Activated T-helper 1 cell treated with anti-CD3 and anti-CD28 coated beads, Interleukin-12 subunit alpha, Interleukin-12 subunit beta, Interleukin-2, Interleukin-4 antibody, amounts not matched to agents 30 ng/mL and 10 ng/mL and 1 ng/mL, durations not matched to agents 14 hours and 24 hours and 36 hours (primary cell): ENCODE measurements at regions of chr1 and their contacts with region 1.

Region 1: GRCh38 chr1:40032240-40032891 is 8.2 kb upstream of the CAP1 start:
- DNase-seq: peak; percentile 24
- H3K4me3 Mint-ChIP-seq: no peak overlapping the region
- H3K27ac Mint-ChIP-seq: no peak overlapping the region
- H3K4me1 Mint-ChIP-seq: peaks cover 36% of the 10 kb centered on the region
- H3K27me3 Mint-ChIP-seq: peaks cover 7% of the 10 kb centered on the region

Region 2: GRCh38 chr1:39799770-39800470 is 232.4 kb before region 1 on chr1:
- intact Hi-C with region 1: no loop called
- DNase-seq: peak; percentile 41
- H3K4me3 Mint-ChIP-seq: peak overlapping the region; percentile 60
- H3K27ac Mint-ChIP-seq: peak overlapping the region; percentile 80
- H3K4me1 Mint-ChIP-seq: peaks cover 12% of the 10 kb centered on the region
- H3K27me3 Mint-ChIP-seq: peaks cover 4% of the 10 kb centered on the region

Region 3: GRCh38 chr1:39816415-39817090 is 215.8 kb before region 1 on chr1:
- intact Hi-C with region 1: loop called (anchors 1 kb)
- DNase-seq: peak; percentile 56
- H3K4me3 Mint-ChIP-seq: peak overlapping the region; percentile 37
- H3K27ac Mint-ChIP-seq: no peak overlapping the region
- H3K4me1 Mint-ChIP-seq: peaks cover 15% of the 10 kb centered on the region
- H3K27me3 Mint-ChIP-seq: peaks cover 20% of the 10 kb centered on the region